ENCODE measurements at regions of chr3 and their contacts with region 1.

Region 1: DNA sequence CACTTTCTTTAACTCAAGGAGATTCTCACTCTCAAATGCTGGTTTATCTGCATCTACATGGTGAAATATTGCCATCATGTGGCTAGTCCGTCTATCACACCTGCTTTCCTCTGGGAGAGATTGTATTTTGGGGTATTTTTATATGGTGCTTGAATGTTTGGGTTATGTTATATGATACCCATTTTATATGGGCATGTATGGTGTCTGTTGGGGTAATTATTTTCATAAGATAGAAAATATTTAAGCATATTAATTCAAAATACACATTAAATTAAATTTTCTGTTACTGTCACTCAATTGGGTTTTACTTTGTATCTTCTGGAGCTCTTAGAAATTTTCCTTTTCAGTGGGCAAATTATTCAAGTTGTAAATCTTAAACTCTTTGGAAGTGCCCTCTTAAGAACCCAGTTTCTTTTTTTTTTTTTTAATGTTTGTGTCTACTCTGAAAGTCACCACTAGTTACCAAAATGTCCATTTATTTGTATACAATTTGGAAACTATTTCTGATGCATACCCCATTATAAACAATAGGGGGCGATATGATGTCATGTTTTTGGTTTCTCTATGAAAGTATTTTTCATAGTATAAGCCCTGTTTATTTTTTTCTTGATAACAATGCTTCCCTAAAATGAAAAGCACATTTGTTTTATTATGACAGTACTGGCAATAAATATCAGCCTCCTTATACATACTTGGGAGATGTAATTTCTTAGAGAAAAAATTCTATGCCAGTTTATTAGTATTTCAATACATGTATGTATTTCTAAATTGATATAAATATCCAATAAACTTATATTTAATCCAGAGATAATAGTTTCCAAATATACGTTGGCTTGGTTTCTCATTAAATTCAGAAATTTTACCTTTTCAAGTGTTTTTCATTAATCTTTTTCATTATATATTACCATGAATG is 36.1 kb upstream of the PLSCR5 start:
- DNase-seq: no peak
- H3K4me3 ChIP-seq: no peak overlapping the region
- H3K27ac ChIP-seq: no peak overlapping the region
- H3K4me1 ChIP-seq: no peaks in the 10 kb centered on the region; a peak in 2 of 7 replicates
- H3K27me3 ChIP-seq: no peaks in the 10 kb centered on the region
- CTCF ChIP-seq: peak in 2 of 3 experiments; percentile 63 to 73; a peak in 2 of 4 replicates
- EP300 ChIP-seq: no peak
- POLR2A ChIP-seq: no peak
- RAD21 ChIP-seq: peak; percentile 88 to 93

Region 2: DNA sequence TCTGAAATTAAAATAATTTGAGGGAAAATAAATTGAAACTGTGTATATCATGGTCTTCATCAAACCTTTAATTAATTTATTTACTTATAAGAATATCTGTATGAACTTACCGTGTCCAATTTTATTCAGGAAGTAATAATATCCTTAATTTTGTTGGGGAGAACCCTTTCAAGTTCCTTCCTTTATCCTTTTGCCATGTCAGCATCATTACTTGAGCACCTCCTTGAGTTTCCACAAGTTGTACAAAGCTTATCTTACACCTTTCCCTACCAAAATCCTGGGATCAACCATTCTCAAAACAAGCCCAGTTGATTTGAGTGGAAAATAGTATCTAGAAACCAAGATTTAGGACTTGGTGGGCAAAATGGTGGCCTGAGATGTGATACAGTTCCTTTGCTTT is 209.1 kb before region 1 on chr3:
- CTCF ChIA-PET with region 1: no interaction called
- POLR2A ChIA-PET with region 1: no interaction called
- DNase-seq: no peak
- H3K4me3 ChIP-seq: no peak overlapping the region
- H3K27ac ChIP-seq: no peak overlapping the region
- H3K4me1 ChIP-seq: no peaks in the 10 kb centered on the region
- H3K27me3 ChIP-seq: no peaks in the 10 kb centered on the region
- CTCF ChIP-seq: no peak
- EP300 ChIP-seq: no peak
- POLR2A ChIP-seq: no peak
- RAD21 ChIP-seq: no peak

Region 3: DNA sequence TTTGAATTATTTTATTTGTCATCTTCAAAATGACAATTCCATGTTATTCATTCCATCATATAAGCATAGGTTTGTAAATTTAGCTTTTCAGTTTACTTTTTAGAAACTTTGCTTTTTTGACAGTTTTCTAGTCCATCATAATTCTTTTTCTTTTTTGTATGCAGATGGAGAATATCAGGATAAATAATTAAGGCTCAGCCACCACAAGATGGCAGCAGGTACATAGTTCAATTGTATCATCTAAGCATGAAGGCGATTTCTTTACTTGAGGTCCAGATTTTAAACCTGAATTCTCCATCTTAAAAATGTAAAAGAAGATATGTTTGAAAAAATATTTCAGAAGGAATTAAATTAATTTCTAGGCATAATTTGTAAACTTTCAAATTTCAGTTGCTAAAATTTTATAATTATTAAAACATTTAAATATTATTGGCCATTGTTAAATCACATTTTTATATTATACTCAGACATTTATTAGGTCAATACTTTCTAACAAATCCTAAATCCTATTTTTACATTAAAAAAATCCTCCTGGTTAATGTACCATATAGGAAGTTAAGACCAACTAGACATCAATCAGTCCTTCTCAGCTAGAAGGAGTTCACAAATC is 51.2 kb before region 1 on chr3:
- CTCF ChIA-PET with region 1: interaction called, 28 read pairs
- POLR2A ChIA-PET with region 1: no interaction called
- DNase-seq: no peak
- H3K4me3 ChIP-seq: no peak overlapping the region
- H3K27ac ChIP-seq: no peak overlapping the region
- H3K4me1 ChIP-seq: no peaks in the 10 kb centered on the region
- H3K27me3 ChIP-seq: no peaks in the 10 kb centered on the region
- CTCF ChIP-seq: peak in 2 of 3 experiments; percentile 28 to 45; a peak in 2 of 4 replicates
- EP300 ChIP-seq: no peak
- POLR2A ChIP-seq: no peak
- RAD21 ChIP-seq: peak; percentile 53 to 58

Region 4: GRCh38 chr3:146598535-146598934 is 42.7 kb before region 1 on chr3:
- CTCF ChIA-PET with region 1: interaction called, 12 read pairs
- POLR2A ChIA-PET with region 1: no interaction called
- DNase-seq: no peak
- H3K4me3 ChIP-seq: no peak overlapping the region
- H3K27ac ChIP-seq: no peak overlapping the region
- H3K4me1 ChIP-seq: no peaks in the 10 kb centered on the region
- H3K27me3 ChIP-seq: no peaks in the 10 kb centered on the region
- CTCF ChIP-seq: no peak
- EP300 ChIP-seq: no peak
- POLR2A ChIP-seq: no peak
- RAD21 ChIP-seq: no peak

Region 5: GRCh38 chr3:146611096-146611495 is 30.1 kb before region 1 on chr3:
- CTCF ChIA-PET with region 1: interaction called, 10 read pairs
- POLR2A ChIA-PET with region 1: no interaction called
- DNase-seq: no peak
- H3K4me3 ChIP-seq: no peak overlapping the region
- H3K27ac ChIP-seq: no peak overlapping the region
- H3K4me1 ChIP-seq: no peaks in the 10 kb centered on the region
- H3K27me3 ChIP-seq: no peaks in the 10 kb centered on the region
- CTCF ChIP-seq: no peak
- EP300 ChIP-seq: no peak
- POLR2A ChIP-seq: no peak
- RAD21 ChIP-seq: no peak

Region 6: GRCh38 chr3:146626403-146627122 is 14.6 kb before region 1 on chr3:
- CTCF ChIA-PET with region 1: interaction called, 12 read pairs
- POLR2A ChIA-PET with region 1: no interaction called
- DNase-seq: no peak
- H3K4me3 ChIP-seq: no peak overlapping the region
- H3K27ac ChIP-seq: no peak overlapping the region
- H3K4me1 ChIP-seq: no peaks in the 10 kb centered on the region
- H3K27me3 ChIP-seq: no peaks in the 10 kb centered on the region
- CTCF ChIP-seq: no peak
- EP300 ChIP-seq: no peak
- POLR2A ChIP-seq: no peak
- RAD21 ChIP-seq: no peak

Region 7: GRCh38 chr3:146658841-146659240 is 17.6 kb after region 1 on chr3:
- CTCF ChIA-PET with region 1: interaction called, 17 read pairs
- POLR2A ChIA-PET with region 1: interaction called, 3 read pairs
- DNase-seq: no peak
- H3K4me3 ChIP-seq: no peak overlapping the region
- H3K27ac ChIP-seq: no peak overlapping the region
- H3K4me1 ChIP-seq: peaks cover 0 to 2% (median 0%) of the 10 kb centered on the region in 4 experiments; a peak in 1 of 7 replicates
- H3K27me3 ChIP-seq: no peaks in the 10 kb centered on the region
- CTCF ChIP-seq: no peak
- EP300 ChIP-seq: no peak
- POLR2A ChIP-seq: no peak
- RAD21 ChIP-seq: no peak

Region 8: DNA sequence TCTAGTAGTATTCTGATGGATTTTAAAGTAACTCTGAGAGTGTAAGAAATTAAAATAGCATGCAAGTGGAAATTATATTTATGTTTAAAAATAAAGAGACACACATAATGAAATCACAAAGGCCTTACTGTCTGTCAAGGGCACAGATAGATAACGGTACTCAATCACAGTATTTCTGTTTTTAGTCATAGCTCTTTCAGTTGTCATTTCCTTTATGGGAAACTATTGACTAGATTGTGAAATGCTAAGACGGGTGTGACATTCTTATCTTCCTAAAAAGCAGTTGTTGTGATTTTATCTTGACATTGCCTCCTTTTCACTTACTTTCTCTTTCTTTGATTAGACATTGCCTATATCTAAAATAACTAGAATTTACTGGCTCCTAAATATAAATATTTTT is 64.0 kb after region 1 on chr3:
- CTCF ChIA-PET with region 1: no interaction called
- POLR2A ChIA-PET with region 1: no interaction called
- DNase-seq: no peak
- H3K4me3 ChIP-seq: no peak overlapping the region
- H3K27ac ChIP-seq: no peak overlapping the region
- H3K4me1 ChIP-seq: no peaks in the 10 kb centered on the region
- H3K27me3 ChIP-seq: no peaks in the 10 kb centered on the region
- CTCF ChIP-seq: no peak
- EP300 ChIP-seq: no peak
- POLR2A ChIP-seq: no peak
- RAD21 ChIP-seq: no peak